ENCODE measurements at regions of chr1 and their contacts with region 1.

Region 1: DNA sequence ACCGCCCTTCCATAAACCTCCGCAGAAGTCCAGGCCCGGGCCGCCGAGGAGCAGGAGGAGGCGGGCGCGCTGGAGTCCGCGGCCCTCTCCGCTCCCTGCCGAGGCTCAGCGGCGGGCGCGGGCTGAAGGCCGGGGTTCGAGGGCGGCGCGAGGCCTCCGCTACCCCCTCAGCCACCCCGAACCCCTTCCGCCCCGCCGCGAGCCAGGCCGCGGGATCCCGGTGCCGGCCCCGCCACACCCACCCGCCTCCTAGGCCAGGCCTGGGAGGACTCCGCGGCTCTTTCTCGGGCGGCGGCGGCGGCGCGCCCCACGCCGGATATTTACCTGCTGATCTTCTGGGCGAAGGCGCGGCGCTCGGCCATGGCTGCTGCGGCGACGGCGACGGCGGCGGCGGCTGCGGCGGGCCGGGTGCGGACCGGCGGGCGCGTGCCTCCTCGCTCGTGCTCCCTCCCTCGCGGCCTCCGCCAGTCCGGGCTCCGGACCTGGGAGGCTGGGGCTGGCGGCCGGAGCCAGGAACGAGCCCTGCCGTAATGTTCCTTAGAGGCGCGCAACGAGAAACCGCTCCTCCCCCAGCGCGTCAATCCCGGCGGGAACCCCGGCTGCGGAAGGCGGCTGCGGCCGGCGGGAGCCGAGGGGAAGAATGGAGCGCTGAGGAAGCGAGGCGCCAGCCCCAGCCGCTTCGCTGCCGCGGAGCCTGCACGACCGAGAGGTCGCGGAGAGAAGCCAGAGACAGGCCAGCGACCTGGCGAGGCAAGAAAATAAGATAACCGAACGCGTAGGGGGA is at the start of gene DOCK7:
- DNase-seq: peak; percentile 25 to 63 (median 51)
- ATAC-seq: peak; percentile 76
- H3K4me3 ChIP-seq: peak within 1 kb of the TSS; percentile 84
- H3K4me3 Mint-ChIP-seq: peak within 1 kb of the TSS; percentile 89 to 99 (median 96)
- H3K27ac ChIP-seq: peak within 1 kb of the TSS; percentile 65
- H3K27ac Mint-ChIP-seq: peak within 1 kb of the TSS; percentile 80 to 98 (median 95)
- H3K4me1 ChIP-seq: peaks cover 0 to 8% of the 10 kb centered on the region in 2 donors
- H3K4me1 Mint-ChIP-seq: peaks cover 8 to 32% (median 16%) of the 10 kb centered on the region in 7 donors
- H3K27me3 ChIP-seq: no peaks in the 10 kb centered on the region
- H3K27me3 Mint-ChIP-seq: peaks cover 0 to 10% (median 3%) of the 10 kb centered on the region in 5 donors
- total RNA-seq, gene DOCK7: 5.1 to 15.0 (median 12.4) TPM

Region 2: DNA sequence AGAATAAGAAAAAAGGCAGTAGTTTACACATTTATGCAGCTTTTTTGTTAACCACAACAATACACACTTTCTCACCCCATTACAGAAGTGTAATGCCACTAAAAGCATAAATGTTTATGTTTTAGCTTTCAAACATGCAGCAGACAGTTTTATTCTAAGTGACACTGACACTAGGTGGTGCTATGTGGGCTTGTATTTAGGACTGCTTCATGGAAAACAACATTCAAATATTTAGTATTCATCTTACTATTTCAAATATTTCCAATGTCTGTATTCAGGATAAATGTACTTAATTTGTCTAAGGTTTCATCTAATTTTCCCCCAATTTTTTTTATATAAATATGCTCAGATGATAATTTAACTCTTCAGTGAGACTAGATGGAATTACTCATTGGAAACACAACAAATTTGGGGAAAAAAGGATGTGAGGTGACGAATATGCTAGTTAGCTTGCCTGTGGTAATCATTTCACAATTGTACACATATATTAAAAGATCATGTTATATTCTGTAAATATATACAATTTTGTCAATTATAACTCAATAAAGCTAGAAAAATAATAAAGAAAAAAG is 179.8 kb before region 1 on chr1:
- CTCF ChIA-PET with region 1: no interaction called
- POLR2A ChIA-PET with region 1: no interaction called
- intact Hi-C with region 1: loop called in 1 of 2 experiments (anchors 2 kb)
- DNase-seq: peak in 5 of 9 donors; percentile 5 to 37 (median 17)
- ATAC-seq: no peak
- H3K4me3 ChIP-seq: no peak overlapping the region
- H3K4me3 Mint-ChIP-seq: no peak overlapping the region
- H3K27ac ChIP-seq: no peak overlapping the region
- H3K27ac Mint-ChIP-seq: no peak overlapping the region
- H3K4me1 ChIP-seq: no peaks in the 10 kb centered on the region
- H3K4me1 Mint-ChIP-seq: no peaks in the 10 kb centered on the region
- H3K27me3 ChIP-seq: no peaks in the 10 kb centered on the region
- H3K27me3 Mint-ChIP-seq: no peaks in the 10 kb centered on the region

Region 3: GRCh38 chr1:62643283-62643682 is 44.8 kb before region 1 on chr1:
- CTCF ChIA-PET with region 1: no interaction called
- POLR2A ChIA-PET with region 1: no interaction called
- intact Hi-C with region 1: loop called in 1 of 2 experiments (anchors 2 kb)
- DNase-seq: no peak
- ATAC-seq: no peak
- H3K4me3 ChIP-seq: no peak overlapping the region
- H3K4me3 Mint-ChIP-seq: no peak overlapping the region
- H3K27ac ChIP-seq: no peak overlapping the region
- H3K27ac Mint-ChIP-seq: no peak overlapping the region
- H3K4me1 ChIP-seq: no peaks in the 10 kb centered on the region
- H3K4me1 Mint-ChIP-seq: no peaks in the 10 kb centered on the region
- H3K27me3 ChIP-seq: no peaks in the 10 kb centered on the region
- H3K27me3 Mint-ChIP-seq: no peaks in the 10 kb centered on the region

Region 4: GRCh38 chr1:62953633-62954032 is 265.5 kb after region 1 on chr1:
- CTCF ChIA-PET with region 1: no interaction called
- POLR2A ChIA-PET with region 1: no interaction called
- intact Hi-C with region 1: no loop called
- DNase-seq: no peak
- ATAC-seq: no peak
- H3K4me3 ChIP-seq: no peak overlapping the region
- H3K4me3 Mint-ChIP-seq: no peak overlapping the region
- H3K27ac ChIP-seq: no peak overlapping the region
- H3K27ac Mint-ChIP-seq: no peak overlapping the region
- H3K4me1 ChIP-seq: no peaks in the 10 kb centered on the region
- H3K4me1 Mint-ChIP-seq: no peaks in the 10 kb centered on the region
- H3K27me3 ChIP-seq: no peaks in the 10 kb centered on the region
- H3K27me3 Mint-ChIP-seq: peaks cover 9 to 45% (median 18%) of the 10 kb centered on the region in 5 donors

Measured in naive thymus-derived CD4-positive, alpha-beta T cell (primary cell).